ENCODE measurements at regions of chr1 and their contacts with region 1.

Region 1: DNA sequence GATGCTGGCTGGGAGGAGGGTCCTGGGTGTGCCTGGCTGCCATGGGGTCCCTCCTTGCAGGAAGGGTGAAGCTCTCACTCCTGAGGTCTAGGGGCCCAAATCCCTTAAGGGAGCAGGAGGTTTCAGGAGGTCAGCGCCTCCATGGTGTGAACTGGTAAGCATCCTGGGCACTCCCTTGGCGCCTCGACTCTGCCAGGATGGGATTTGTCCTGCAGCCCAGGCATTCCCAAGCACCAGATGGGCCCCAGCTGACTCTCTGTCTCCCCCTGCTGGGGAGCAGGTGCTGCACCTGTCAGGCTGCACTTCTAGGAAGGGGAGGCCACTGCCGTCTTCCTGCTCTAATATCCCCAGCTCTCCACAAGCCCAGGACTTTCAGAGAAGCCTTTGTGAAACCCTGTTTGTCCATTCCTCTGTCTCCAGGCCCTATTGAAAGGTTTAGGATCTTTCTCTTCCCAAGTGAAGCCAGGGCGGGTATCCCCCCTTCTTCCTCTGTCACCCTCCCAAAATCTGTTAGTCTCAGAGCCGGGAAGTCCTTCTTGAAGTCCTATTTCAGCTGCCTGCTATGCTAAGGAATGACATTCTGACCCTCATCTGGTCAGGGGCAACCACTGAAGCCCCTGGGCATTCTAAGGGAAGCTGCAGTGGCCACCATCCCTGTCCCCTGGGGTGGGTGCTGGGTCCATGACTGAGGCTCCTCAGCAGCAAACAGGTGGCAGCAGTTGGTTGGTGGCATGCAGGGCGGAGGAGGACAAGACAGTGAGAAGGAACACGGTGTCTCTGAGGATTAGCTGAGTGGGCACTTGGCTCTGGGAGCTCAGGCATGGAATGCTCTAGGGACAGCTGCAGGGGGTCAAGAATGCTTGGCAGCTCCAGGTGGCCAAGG is 3.3 kb downstream of the MYBPH start:
- DNase-seq: peak; percentile 65
- ATAC-seq: peak; percentile 74
- H3K4me3 Mint-ChIP-seq: no peak overlapping the region
- H3K27ac Mint-ChIP-seq: no peak overlapping the region
- H3K4me1 Mint-ChIP-seq: no peaks in the 10 kb centered on the region
- H3K27me3 Mint-ChIP-seq: no peaks in the 10 kb centered on the region

Region 2: GRCh38 chr1:203117611-203118575 is 54.5 kb before region 1 on chr1:
- CTCF ChIA-PET with region 1: interaction called, 25 read pairs
- POLR2A ChIA-PET with region 1: no interaction called
- DNase-seq: peak; percentile 54
- ATAC-seq: peak; percentile 80
- H3K4me3 Mint-ChIP-seq: no peak overlapping the region
- H3K27ac Mint-ChIP-seq: no peak overlapping the region
- H3K4me1 Mint-ChIP-seq: peaks cover 16% of the 10 kb centered on the region
- H3K27me3 Mint-ChIP-seq: peaks cover 43% of the 10 kb centered on the region

Region 3: GRCh38 chr1:203148125-203148524 is 24.2 kb before region 1 on chr1:
- CTCF ChIA-PET with region 1: interaction called, 13 read pairs
- POLR2A ChIA-PET with region 1: no interaction called
- DNase-seq: no peak
- ATAC-seq: peak; percentile 30
- H3K4me3 Mint-ChIP-seq: no peak overlapping the region
- H3K27ac Mint-ChIP-seq: no peak overlapping the region
- H3K4me1 Mint-ChIP-seq: no peaks in the 10 kb centered on the region
- H3K27me3 Mint-ChIP-seq: no peaks in the 10 kb centered on the region

Measured in activated CD8-positive, alpha-beta T cell treated with anti-CD3 and anti-CD28 coated beads, Interleukin-2, amount 10 ng/mL, durations not matched to agents 7 days and 5 days (primary cell).